ENCODE measurements at regions of chr2 and their contacts with region 1.

Region 1: GRCh38 chr2:95076784-95077529 is 44.7 kb downstream of the MRPS5 start:
- DNase-seq: peak; percentile 67
- H3K4me3 ChIP-seq: peak overlapping the region; percentile 50 to 60 (median 58)
- H3K27ac ChIP-seq: no peak overlapping the region
- H3K4me1 ChIP-seq: peaks cover 7% of the 10 kb centered on the region
- H3K27me3 ChIP-seq: no peaks in the 10 kb centered on the region
- CTCF ChIP-seq: peak; percentile 78 to 95

Region 2: GRCh38 chr2:95022309-95023221 is 54.4 kb before region 1 on chr2:
- CTCF ChIA-PET with region 1: interaction called, 5 read pairs
- dilution Hi-C with region 1: no loop called
- in situ Hi-C with region 1: loop called in 1 of 2 experiments (anchors 5 kb)
- intact Hi-C with region 1: loop called (anchors 1 kb)
- DNase-seq: peak; percentile 53
- H3K4me3 ChIP-seq: no peak overlapping the region
- H3K27ac ChIP-seq: no peak overlapping the region
- H3K4me1 ChIP-seq: no peaks in the 10 kb centered on the region
- H3K27me3 ChIP-seq: peaks cover 14% of the 10 kb centered on the region
- CTCF ChIP-seq: peak; percentile 95 to 96

Region 3: DNA sequence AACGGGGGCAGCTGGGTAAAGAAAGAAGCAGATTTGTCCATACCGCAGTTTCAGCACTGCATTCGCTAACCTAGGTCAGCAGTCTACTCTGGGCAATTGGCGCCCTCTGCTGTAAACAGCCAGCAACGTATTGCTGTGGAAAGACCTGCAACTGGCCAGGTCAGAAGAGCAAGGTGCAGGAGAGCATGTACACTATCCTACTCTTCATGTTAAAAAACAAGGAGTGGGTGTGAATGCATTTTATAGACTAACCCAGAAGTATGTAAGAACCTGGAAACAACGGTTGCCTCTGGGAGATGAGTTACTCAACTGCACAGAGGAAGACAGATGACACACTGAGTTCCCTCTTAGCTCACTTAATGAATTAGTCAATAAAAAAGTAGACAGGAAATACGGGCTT is 38.5 kb after region 1 on chr2:
- CTCF ChIA-PET with region 1: no interaction called
- dilution Hi-C with region 1: no loop called
- in situ Hi-C with region 1: no loop called
- intact Hi-C with region 1: loop called (anchors 1 kb)
- DNase-seq: peak; percentile 66
- H3K4me3 ChIP-seq: no peak overlapping the region
- H3K27ac ChIP-seq: no peak overlapping the region
- H3K4me1 ChIP-seq: peaks cover 1% of the 10 kb centered on the region
- H3K27me3 ChIP-seq: no peaks in the 10 kb centered on the region
- CTCF ChIP-seq: peak; percentile 90 to 92

Region 4: DNA sequence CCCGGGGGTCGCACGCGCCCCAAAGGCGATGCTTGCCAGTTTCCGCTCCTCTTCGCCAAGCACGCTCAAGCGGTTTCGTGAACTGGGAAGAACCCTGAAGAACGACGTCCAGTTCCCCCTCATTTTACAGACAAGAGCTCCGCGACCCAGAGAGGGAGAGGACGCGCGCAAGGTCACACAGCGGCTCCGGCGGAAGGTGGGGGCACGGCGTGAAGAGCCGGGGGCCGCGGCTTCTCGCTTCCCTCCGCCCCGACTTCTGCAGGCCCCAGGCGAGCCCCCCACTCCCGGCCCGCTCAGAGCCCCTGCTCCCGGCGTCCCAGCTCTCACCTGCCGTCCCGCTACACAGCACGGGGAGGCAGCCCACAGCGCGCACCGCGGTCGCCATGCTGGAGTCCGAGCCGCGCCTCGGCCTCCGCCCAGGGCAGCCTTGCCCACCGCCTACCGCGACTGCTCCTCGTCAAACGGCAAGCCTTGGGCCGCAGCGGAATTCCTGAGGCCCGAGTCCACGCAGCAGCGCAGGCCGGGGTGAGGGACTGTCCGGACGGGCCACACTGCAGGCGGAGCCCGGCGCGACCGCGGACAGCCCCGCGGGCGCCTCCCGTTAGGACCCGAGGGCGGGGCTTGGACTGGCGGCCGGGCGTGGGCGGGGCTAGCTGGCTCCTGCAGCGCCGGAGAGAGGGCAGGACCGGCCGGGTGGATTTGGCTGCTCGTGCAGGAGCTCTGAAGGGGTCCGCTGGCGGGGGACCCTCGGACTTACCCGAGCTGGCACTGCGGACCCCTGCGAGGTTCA is 44.6 kb after region 1 on chr2 and contains the start of gene MRPS5:
- CTCF ChIA-PET with region 1: interaction called, 26 read pairs
- dilution Hi-C with region 1: no loop called
- in situ Hi-C with region 1: no loop called
- intact Hi-C with region 1: no loop called
- DNase-seq: peak; percentile 72
- H3K4me3 ChIP-seq: peak within 1 kb of the TSS; percentile 91 to 97 (median 92)
- H3K27ac ChIP-seq: peak within 1 kb of the TSS; percentile 82
- H3K4me1 ChIP-seq: peaks cover 10% of the 10 kb centered on the region
- H3K27me3 ChIP-seq: no peaks in the 10 kb centered on the region
- CTCF ChIP-seq: peak in 1 of 2 donors; percentile 32
- total RNA-seq, gene MRPS5: 21.7 to 46.8 TPM

Region 5: DNA sequence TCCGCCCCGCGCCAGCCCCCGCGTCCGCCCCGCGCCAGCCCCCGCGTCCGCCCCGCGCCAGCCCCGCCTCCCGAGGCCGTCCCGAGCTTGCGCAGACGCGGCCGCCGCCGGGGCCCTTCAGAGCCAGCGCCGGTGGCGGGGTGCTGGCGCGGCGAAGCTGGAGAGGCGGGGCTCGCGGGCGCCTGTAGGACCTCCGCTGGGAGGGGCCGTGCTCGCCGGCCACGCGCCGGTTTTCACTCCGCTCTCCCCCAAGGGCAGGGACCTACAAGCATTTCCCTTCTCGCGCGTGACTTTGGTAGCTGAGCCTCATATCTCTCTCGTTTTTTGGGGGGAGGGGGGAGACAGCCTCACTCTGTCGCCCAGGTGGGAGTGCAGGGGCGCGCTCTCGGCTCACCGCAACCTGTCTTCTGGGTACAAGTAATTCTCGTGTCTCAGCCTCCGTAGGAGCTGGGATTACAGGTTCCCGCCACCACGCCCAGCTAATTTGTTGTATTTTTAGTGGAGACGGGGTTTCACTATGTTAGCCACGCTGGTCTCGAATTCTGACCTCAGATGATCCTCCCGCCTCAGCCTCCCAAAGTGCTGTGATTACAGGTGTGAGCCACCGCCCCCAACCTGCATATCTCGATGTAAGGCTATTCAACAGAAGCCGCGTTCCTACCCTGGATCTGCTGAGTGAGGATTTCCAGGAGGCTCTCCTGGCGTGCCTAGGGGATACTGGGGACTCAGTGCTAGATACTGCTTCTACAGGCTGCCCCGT is 82.9 kb after region 1 on chr2 and contains the start of gene ZNF514:
- CTCF ChIA-PET with region 1: no interaction called
- dilution Hi-C with region 1: no loop called
- in situ Hi-C with region 1: no loop called
- intact Hi-C with region 1: no loop called
- DNase-seq: peak; percentile 54
- H3K4me3 ChIP-seq: peak within 1 kb of the TSS; percentile 74 to 87 (median 82)
- H3K27ac ChIP-seq: no peak within 1 kb of the TSS
- H3K4me1 ChIP-seq: peaks cover 13% of the 10 kb centered on the region
- H3K27me3 ChIP-seq: no peaks in the 10 kb centered on the region
- CTCF ChIP-seq: no peak
- total RNA-seq, gene ZNF514: 12.4 to 14.5 TPM

Region 6: GRCh38 chr2:95207111-95207961 is 130.4 kb after region 1 on chr2 and contains the start of gene ZNF892:
- CTCF ChIA-PET with region 1: no interaction called
- dilution Hi-C with region 1: no loop called
- in situ Hi-C with region 1: no loop called
- intact Hi-C with region 1: loop called (anchors 2 kb)
- DNase-seq: peak; percentile 96
- H3K4me3 ChIP-seq: peak within 1 kb of the TSS; percentile 56 to 73 (median 64)
- H3K27ac ChIP-seq: peak within 1 kb of the TSS; percentile 63
- H3K4me1 ChIP-seq: peaks cover 13% of the 10 kb centered on the region
- H3K27me3 ChIP-seq: no peaks in the 10 kb centered on the region
- CTCF ChIP-seq: peak; percentile 9 to 59
- total RNA-seq, gene ZNF892: 4.8 to 12.0 TPM

Region 7: DNA sequence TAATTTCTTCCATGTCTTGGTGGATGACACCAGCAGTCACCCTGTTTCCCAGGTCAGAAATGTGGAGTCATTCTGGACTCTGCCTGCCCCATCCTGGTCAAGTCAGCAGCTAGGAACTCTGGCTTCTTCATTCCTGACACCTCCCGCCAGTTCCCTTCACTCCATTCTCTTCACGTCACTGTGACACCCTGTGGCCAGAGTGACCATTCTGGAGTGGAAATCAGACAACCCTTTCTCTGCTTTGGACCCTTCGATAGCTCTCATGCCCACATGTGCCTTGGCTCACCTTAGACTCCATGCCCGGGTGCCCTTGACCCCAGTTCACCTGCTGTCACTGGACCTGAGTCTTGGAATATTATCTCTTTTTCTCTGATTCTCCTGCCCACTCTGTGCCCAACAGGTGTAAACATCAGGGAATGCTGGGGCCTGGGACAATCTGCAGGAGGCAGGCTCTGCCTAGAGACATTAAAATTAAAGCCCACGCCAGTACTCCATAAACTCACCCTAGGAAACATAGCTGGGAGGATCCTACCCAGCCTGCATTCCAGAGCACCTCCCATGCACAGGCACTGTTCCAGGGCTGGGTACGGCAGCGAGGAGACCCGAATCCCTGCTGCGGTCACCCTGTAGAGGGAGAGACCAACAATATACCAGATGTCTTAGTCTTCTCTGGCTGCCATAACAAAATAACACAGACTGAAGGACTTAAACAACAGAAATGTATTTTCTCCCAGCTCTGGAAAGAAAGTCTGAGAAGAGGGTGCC is 284.4 kb after region 1 on chr2:
- CTCF ChIA-PET with region 1: interaction called, 20 read pairs
- dilution Hi-C with region 1: no loop called
- in situ Hi-C with region 1: no loop called
- intact Hi-C with region 1: no loop called
- DNase-seq: no peak
- H3K4me3 ChIP-seq: no peak overlapping the region
- H3K27ac ChIP-seq: no peak overlapping the region
- H3K4me1 ChIP-seq: no peaks in the 10 kb centered on the region
- H3K27me3 ChIP-seq: no peaks in the 10 kb centered on the region
- CTCF ChIP-seq: no peak